Natural killer cell (primary cell): ENCODE measurements at regions of chr6 and their contacts with region 1.

Region 1: DNA sequence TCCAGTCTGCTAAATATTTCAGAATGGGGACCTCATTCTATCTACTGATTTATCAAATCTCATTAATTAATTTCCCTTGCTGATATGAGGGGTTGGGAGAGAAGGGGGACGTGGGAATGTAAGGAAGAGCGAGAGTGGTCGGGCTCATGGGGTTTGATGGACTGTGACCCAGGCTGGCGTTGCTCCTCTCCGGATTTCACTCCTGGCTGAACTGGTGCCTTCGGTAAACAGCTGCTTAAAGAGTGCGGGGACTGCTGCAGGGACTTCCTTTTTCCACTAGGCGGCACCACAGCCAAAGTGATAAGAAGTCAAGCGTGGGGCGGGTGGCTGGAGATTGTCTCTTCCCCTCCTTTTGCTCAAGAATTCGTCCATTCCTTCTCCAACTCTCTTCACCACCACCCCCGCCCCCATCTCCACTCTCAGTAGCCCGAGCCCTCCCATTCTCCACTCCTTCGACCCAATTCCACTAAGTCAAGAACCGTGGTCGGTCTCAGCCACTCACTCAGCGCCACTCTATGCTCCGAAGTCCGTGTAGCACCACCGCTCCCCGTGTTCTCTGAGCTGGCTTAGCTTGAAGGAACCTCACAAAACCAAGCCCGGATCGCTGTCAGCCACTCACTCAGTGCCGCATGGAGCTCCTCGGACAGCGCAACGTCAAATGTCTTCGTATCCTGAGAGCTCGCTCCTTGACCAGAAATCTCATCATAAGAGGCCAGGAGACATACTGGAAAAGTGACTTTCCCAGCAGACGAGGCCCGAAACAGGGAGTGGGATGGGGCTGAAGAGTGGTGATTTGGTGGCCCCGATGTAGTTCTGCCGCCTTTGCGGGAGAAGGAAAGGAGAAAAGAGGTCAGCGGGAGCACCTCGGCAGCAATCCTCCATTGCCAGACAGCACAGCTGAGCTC is 9.7 kb downstream of the TRIM31 start:
- DNase-seq: peak; percentile 72 to 92
- ATAC-seq: peak; percentile 89
- H3K4me3 ChIP-seq: peak overlapping the region; percentile 37
- H3K4me3 Mint-ChIP-seq: peak overlapping the region; percentile 73
- H3K27ac ChIP-seq: peak overlapping the region; percentile 11
- H3K27ac Mint-ChIP-seq: peak overlapping the region; percentile 71 to 80
- H3K4me1 ChIP-seq: peaks cover 38% of the 10 kb centered on the region
- H3K4me1 Mint-ChIP-seq: peaks cover 34 to 37% of the 10 kb centered on the region in 2 donors
- H3K27me3 ChIP-seq: peaks cover 34% of the 10 kb centered on the region
- H3K27me3 Mint-ChIP-seq: peaks cover 44 to 54% of the 10 kb centered on the region in 2 donors
- CTCF ChIP-seq: peak; percentile 84

Region 2: DNA sequence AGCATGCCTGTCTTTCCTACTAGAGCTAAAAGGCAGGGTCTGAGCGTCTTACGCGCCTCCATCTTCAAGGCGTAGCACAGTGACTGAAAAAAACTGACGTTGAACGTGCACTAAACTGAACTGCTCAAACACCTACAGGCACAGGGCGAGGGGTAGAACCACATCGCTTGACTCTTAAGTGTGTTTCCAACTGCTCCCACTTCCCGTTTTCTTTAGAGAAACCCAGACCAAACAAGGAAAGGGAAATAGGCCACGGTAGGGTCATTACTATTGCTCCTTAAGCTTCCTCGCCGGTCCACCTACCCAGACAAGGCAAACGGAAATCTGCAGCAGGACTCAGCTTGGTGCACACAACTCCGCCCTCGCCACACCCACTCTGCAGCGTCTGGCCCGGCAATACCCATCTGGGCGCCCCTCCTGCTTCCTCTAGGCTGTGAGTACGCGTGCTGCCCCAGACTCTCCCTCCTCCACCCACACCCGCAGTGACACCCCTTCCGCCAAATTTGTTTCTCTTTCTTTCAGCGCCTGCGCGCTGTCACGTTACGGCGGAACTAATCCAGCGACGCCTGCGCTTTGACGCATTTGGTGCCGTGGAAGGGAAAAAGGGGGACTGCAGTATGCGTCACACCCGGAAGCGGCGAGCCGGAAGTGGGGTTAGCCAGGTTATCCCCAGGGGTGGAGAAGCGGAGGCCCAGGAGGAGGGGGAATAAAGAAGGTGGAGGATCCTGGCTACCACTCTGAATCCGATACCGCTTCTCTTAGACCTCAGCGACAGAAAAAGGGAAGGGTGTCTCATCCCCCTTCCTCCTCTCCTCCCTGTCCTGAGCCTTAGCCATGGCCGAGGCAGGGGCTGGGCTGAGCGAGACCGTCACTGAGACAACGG is 36.4 kb before region 1 on chr6 and contains the start of gene PPP1R11:
- intact Hi-C with region 1: no loop called
- DNase-seq: peak; percentile 97 to 99
- ATAC-seq: peak; percentile 94 to 100 (median 95)
- H3K4me3 ChIP-seq: peak within 1 kb of the TSS; percentile 87
- H3K4me3 Mint-ChIP-seq: peak within 1 kb of the TSS; percentile 98
- H3K27ac ChIP-seq: peak within 1 kb of the TSS; percentile 99
- H3K27ac Mint-ChIP-seq: peak within 1 kb of the TSS; percentile 98 to 100
- H3K4me1 ChIP-seq: peaks cover 34% of the 10 kb centered on the region
- H3K4me1 Mint-ChIP-seq: peaks cover 49 to 64% of the 10 kb centered on the region in 2 donors
- H3K27me3 ChIP-seq: peaks cover 3% of the 10 kb centered on the region
- H3K27me3 Mint-ChIP-seq: peaks cover 6 to 12% of the 10 kb centered on the region in 2 donors
- CTCF ChIP-seq: no peak
- total RNA-seq, gene PPP1R11: 52.9 to 75.3 (median 61.1) TPM

Region 3: DNA sequence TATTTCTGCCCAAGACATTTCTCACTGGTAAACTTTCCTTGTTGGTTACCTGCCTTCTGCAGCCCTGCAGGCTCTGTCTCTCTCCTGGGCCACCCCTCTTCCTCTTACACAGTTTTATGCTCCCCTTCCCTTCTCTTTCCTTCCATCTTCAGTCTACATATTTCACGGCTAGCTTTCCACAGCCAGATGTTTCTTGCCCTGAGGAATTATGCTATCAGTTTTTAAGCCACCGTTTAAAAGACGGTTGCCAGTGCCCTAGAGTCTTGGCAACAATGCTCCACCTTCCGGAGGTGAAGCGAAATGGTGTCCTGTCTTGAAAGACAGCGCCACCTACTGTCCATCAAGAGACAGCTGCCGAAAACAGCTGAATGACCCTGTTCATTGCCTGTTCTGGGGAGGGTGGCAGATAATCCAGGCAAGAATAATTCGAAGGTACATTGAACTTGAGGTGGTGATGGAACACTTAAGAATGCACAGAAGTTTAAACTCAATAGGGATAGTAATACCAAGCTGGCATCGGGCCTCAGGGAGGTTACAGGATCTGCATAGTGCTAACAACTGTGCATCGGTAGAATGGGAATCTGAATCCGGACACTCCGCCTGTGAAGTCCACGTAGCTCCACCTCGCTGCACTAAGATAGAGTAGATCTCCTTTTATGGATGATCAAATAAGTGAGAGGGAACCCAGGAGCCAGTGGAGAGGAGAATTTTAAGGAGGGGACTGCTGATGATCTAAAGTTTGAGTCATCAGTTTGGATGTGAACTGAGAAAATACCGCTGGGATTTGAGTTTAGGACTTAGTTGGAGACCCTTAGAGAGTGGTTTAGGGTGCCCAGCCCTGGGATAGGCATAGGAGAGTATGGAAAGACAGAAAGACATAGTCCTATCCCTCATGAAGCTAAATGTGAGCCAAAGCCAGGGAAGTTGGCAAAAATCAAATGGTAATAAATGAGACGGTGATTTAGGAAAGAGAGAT is 28.0 kb after region 1 on chr6:
- intact Hi-C with region 1: loop called (anchors 1 kb)
- DNase-seq: peak; percentile 36 to 94
- ATAC-seq: peak; percentile 95 to 99 (median 98)
- H3K4me3 ChIP-seq: no peak overlapping the region
- H3K4me3 Mint-ChIP-seq: no peak overlapping the region
- H3K27ac ChIP-seq: no peak overlapping the region
- H3K27ac Mint-ChIP-seq: no peak overlapping the region
- H3K4me1 ChIP-seq: peaks cover 4% of the 10 kb centered on the region
- H3K4me1 Mint-ChIP-seq: peaks cover 5 to 7% of the 10 kb centered on the region in 2 donors
- H3K27me3 ChIP-seq: peaks cover 26% of the 10 kb centered on the region
- H3K27me3 Mint-ChIP-seq: peaks cover 48 to 68% of the 10 kb centered on the region in 2 donors
- CTCF ChIP-seq: peak; percentile 100

Region 4: DNA sequence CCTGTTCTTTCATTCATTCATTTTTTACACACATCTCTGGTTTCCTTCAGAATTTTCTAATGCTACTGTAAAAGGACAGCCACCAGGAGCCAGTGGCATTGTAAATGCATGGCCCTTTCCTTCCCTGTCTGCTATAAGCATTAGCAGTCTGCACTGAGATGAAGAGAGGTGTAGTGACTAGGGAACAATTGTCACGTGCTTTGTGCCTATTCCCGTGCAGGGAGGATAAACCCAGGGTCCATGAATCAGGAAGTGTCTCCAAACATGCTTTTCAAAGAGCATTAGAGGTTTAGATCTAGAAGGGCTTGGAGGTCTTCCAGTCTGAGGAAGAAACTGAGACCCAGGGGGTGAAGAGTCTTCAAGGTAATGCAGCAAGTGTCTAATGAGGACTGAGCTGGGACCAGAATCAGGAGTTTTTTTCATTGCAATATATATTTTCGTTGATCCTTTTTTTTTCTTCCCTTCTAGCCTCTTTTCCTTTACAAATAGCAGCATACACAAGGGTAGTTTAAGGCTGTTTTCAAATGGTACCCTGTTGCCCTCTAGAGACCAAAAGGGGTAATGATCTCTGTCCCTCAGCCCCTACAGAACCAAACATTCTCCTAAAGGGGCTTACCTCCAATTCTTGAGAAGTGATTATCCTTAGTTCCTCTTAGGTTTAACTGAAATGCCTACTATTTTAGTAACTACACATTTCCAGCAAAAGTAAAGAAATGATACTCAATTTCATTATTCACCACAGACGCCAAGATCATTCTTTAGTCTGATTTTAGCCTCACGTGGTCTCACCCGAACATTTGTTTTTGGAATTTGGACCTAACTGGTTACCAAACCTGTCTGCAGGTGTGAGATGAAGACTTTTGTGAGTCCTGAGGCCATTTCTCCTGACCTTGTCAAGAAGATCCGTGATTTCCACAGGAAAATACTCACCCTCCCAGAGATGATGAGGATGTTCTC is 66.7 kb after region 1 on chr6:
- intact Hi-C with region 1: loop called (anchors 1 kb)
- DNase-seq: peak in 1 of 2 donors; percentile 71
- ATAC-seq: peak; percentile 72 to 83 (median 78)
- H3K4me3 ChIP-seq: no peak overlapping the region
- H3K4me3 Mint-ChIP-seq: no peak overlapping the region
- H3K27ac ChIP-seq: no peak overlapping the region
- H3K27ac Mint-ChIP-seq: no peak overlapping the region
- H3K4me1 ChIP-seq: peaks cover 11% of the 10 kb centered on the region
- H3K4me1 Mint-ChIP-seq: peaks cover 0 to 6% of the 10 kb centered on the region in 2 donors
- H3K27me3 ChIP-seq: peaks cover 25% of the 10 kb centered on the region
- H3K27me3 Mint-ChIP-seq: peaks cover 43 to 68% of the 10 kb centered on the region in 2 donors
- CTCF ChIP-seq: peak; percentile 74